ENCODE measurements at regions of chr1 and their contacts with region 1.

Region 1: DNA sequence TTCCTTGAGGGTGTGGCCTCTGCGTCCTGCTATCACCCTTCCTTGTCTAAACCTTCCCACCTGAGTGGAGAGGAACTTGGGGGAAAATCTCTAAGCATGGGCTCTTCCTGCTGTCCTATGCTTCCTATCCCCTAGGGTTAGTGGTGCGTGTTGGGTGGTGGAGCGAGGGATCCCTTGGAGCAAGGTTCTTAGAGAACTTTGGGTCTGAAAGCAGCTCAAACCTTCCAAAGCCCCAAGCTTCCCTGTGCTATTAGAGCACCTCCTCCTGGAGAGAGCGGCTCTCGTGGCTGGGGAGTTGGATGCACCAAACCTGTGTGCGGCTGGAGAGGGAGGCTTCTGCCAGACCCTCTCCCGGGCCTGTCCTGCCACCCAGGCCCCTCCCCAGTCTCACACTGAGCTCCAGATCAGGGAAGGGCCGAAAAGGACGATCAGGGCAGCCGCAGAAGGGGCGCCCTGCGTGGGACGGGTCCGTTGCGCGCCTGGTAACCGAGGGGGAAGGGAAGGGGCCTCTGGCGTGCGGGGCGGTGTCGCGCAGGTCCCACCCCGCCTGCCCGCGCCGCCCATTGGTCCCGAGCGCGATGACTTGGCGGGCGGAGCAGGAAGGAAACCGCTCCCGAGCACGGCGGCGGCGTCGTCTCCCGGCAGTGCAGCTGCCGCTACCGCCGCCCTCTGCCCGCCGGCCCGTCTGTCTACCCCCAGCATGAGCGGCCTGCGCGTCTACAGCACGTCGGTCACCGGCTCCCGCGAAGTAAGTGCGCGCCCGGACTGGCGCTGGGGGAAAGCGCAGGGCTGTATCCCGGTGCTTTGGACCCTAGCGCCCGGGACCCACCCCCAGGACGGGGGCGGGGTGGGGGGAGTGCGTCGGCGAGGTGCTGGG is at the start of gene SH3BGRL3:
- DNase-seq: peak; percentile 84
- H3K4me3 Mint-ChIP-seq: peak within 1 kb of the TSS; percentile 93
- H3K27ac Mint-ChIP-seq: peak within 1 kb of the TSS; percentile 97
- H3K4me1 Mint-ChIP-seq: peaks cover 76% of the 10 kb centered on the region
- H3K27me3 Mint-ChIP-seq: no peaks in the 10 kb centered on the region
- total RNA-seq, gene SH3BGRL3: 437 TPM in 2 replicates

Region 2: GRCh38 chr1:26009796-26010460 is 269.8 kb before region 1 on chr1:
- intact Hi-C with region 1: no loop called
- DNase-seq: no peak
- H3K4me3 Mint-ChIP-seq: no peak overlapping the region
- H3K27ac Mint-ChIP-seq: no peak overlapping the region
- H3K4me1 Mint-ChIP-seq: peaks cover 3% of the 10 kb centered on the region
- H3K27me3 Mint-ChIP-seq: peaks cover 10% of the 10 kb centered on the region

Region 3: DNA sequence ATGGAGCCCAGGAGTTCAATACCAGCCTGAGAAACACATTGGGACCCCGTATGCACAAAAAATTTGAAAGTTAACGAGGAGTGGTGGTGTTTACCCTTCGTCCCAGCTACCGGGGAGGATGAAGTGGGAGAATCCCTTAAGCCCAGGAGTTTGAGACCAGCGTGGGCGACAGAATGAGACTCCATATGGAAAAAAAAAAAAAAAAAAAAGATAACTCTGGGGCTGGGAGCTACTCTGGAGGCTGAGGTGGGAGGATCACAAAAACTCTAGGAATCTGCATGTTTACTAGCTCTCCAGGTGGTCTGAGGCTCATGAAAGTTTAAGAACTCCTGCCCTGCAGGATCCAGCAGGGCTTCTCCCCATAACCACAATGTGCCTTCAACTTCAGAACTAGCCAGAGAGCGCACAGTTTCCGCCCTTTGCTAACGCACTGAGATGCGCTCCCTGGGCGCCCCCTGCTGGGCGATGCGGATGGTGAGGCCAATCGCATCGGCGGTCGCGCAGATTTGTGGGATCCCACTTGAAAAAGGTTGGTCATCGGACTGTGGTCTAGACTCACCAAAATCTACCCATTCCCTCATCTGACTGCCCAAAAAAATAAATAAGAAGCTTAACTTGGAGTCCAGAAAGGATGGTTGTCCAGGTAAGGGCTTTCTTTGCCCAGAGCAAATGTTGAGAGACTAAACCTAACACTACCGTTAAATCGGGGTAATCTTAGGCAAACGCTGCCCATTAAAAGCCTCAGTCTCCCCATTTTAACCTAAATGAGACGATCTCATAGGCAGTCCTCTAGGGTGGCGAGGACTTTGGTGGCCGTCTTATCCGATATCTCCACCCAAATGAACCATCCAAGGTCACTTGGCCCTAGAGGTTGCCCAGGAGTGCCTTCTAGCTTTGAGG is 84.1 kb after region 1 on chr1:
- intact Hi-C with region 1: loop called (anchors 5 kb)
- DNase-seq: peak; percentile 77
- H3K4me3 Mint-ChIP-seq: no peak overlapping the region
- H3K27ac Mint-ChIP-seq: no peak overlapping the region
- H3K4me1 Mint-ChIP-seq: peaks cover 25% of the 10 kb centered on the region
- H3K27me3 Mint-ChIP-seq: peaks cover 38% of the 10 kb centered on the region

Region 4: GRCh38 chr1:26378088-26378878 is 98.6 kb after region 1 on chr1:
- intact Hi-C with region 1: loop called (anchors 5 kb)
- DNase-seq: peak; percentile 82
- H3K4me3 Mint-ChIP-seq: peak overlapping the region; percentile 44
- H3K27ac Mint-ChIP-seq: peak overlapping the region; percentile 75
- H3K4me1 Mint-ChIP-seq: peaks cover 58% of the 10 kb centered on the region
- H3K27me3 Mint-ChIP-seq: no peaks in the 10 kb centered on the region

Region 5: GRCh38 chr1:26450908-26451307 is 171.2 kb after region 1 on chr1:
- intact Hi-C with region 1: no loop called
- DNase-seq: no peak
- H3K4me3 Mint-ChIP-seq: no peak overlapping the region
- H3K27ac Mint-ChIP-seq: no peak overlapping the region
- H3K4me1 Mint-ChIP-seq: no peaks in the 10 kb centered on the region
- H3K27me3 Mint-ChIP-seq: no peaks in the 10 kb centered on the region

Region 6: GRCh38 chr1:26541816-26542711 is 262.4 kb after region 1 on chr1:
- intact Hi-C with region 1: loop called (anchors 10 kb)
- DNase-seq: peak; percentile 73
- H3K4me3 Mint-ChIP-seq: peak overlapping the region; percentile 77
- H3K27ac Mint-ChIP-seq: peak overlapping the region; percentile 97
- H3K4me1 Mint-ChIP-seq: peaks cover 67% of the 10 kb centered on the region
- H3K27me3 Mint-ChIP-seq: no peaks in the 10 kb centered on the region